ENCODE measurements at regions of chr11 and their contacts with region 1.

Region 1: GRCh38 chr11:17230867-17231851 is 23.4 kb upstream of the PIK3C2A start:
- DNase-seq: no peak
- ATAC-seq: no peak
- H3K4me3 ChIP-seq: no peak overlapping the region
- H3K27ac ChIP-seq: no peak overlapping the region
- H3K4me1 ChIP-seq: no peaks in the 10 kb centered on the region
- H3K27me3 ChIP-seq: no peaks in the 10 kb centered on the region
- CTCF ChIP-seq: no peak

Region 2: GRCh38 chr11:17250561-17251350 is 19.6 kb after region 1 on chr11:
- CTCF ChIA-PET with region 1: no interaction called
- POLR2A ChIA-PET with region 1: no interaction called
- intact Hi-C with region 1: no loop called
- DNase-seq: peak; percentile 12
- ATAC-seq: peak; percentile 40
- H3K4me3 ChIP-seq: no peak overlapping the region
- H3K27ac ChIP-seq: no peak overlapping the region
- H3K4me1 ChIP-seq: peaks cover under 1% of the 10 kb centered on the region; the same call in 1 of the 2 replicates
- H3K27me3 ChIP-seq: no peaks in the 10 kb centered on the region
- CTCF ChIP-seq: no peak

Region 3: GRCh38 chr11:17267561-17267960 is 36.4 kb after region 1 on chr11:
- CTCF ChIA-PET with region 1: no interaction called
- POLR2A ChIA-PET with region 1: no interaction called
- intact Hi-C with region 1: loop called (anchors 2 kb)
- DNase-seq: peak; percentile 94
- ATAC-seq: peak; percentile 90
- H3K4me3 ChIP-seq: no peak overlapping the region
- H3K27ac ChIP-seq: no peak overlapping the region
- H3K4me1 ChIP-seq: peaks cover 8% of the 10 kb centered on the region
- H3K27me3 ChIP-seq: no peaks in the 10 kb centered on the region
- CTCF ChIP-seq: peak; percentile 40; the same call in 1 of the 2 replicates

Region 4: GRCh38 chr11:17354601-17354991 is 123.4 kb after region 1 on chr11:
- CTCF ChIA-PET with region 1: no interaction called
- POLR2A ChIA-PET with region 1: no interaction called
- intact Hi-C with region 1: loop called (anchors 2 kb)
- DNase-seq: peak; percentile 73
- ATAC-seq: peak; percentile 14; the same call in 1 of the 2 replicates
- H3K4me3 ChIP-seq: peak overlapping the region; percentile 69
- H3K27ac ChIP-seq: no peak overlapping the region
- H3K4me1 ChIP-seq: peaks cover 5% of the 10 kb centered on the region; the same call in 1 of the 2 replicates
- H3K27me3 ChIP-seq: no peaks in the 10 kb centered on the region
- CTCF ChIP-seq: peak; percentile 75

Region 5: DNA sequence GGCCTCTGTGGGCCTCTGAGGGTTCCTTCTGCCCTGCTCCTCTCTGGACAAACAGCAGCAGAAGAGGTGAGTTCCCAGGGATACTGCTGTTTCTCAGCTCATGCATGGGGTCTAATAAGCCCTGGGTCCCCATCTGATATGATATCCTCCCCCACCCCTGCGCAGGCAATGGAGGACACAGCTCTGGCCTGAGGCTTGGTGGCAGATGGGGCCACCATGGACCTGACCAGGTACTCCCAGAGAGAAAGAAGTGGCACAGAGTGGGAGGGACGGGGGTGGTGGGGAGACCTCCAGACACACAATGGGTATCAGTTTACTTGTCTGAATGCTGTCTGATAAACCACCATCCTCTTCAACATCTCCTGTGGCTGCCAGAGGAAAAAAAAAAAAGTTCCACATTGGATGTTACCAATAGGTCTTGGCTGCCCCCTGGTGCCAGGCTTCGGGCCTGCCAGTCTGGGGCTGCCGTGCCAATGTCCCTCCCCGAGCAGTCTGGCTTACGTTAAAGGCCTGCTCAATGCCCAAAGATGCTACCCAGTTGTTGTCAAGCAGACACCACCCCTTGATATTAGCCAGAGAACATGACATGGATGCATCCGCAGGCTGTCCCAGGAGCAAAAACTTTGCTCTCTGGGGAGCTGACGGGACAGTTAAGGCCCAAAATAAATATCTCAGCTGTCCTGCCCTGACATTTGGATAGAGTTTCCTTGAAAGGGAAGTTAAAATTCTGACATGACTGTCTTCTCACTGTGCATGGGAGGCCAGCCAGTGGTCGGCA is 273.4 kb after region 1 on chr11:
- CTCF ChIA-PET with region 1: no interaction called
- POLR2A ChIA-PET with region 1: no interaction called
- intact Hi-C with region 1: loop called (anchors 10 kb)
- DNase-seq: peak; percentile 74
- ATAC-seq: peak; percentile 88
- H3K4me3 ChIP-seq: no peak overlapping the region
- H3K27ac ChIP-seq: no peak overlapping the region
- H3K4me1 ChIP-seq: no peaks in the 10 kb centered on the region
- H3K27me3 ChIP-seq: peaks cover 10% of the 10 kb centered on the region; the same call in 1 of the 2 replicates
- CTCF ChIP-seq: peak; percentile 84